ENCODE measurements at regions of chr12 and their contacts with region 1.

Region 1: GRCh38 chr12:46459861-46460545 is 87.4 kb upstream of the SLC38A2 start:
- DNase-seq: peak; percentile 18
- H3K4me3 Mint-ChIP-seq: peak overlapping the region; percentile 44
- H3K27ac Mint-ChIP-seq: peak overlapping the region; percentile 79
- H3K4me1 Mint-ChIP-seq: peaks cover 55% of the 10 kb centered on the region
- H3K27me3 Mint-ChIP-seq: no peaks in the 10 kb centered on the region

Region 2: GRCh38 chr12:46217541-46218321 is 242.3 kb before region 1 on chr12:
- CTCF ChIA-PET with region 1: no interaction called
- POLR2A ChIA-PET with region 1: no interaction called
- intact Hi-C with region 1: loop called (anchors 5 kb)
- DNase-seq: peak; percentile 75
- H3K4me3 Mint-ChIP-seq: peak overlapping the region; percentile 61
- H3K27ac Mint-ChIP-seq: peak overlapping the region; percentile 98
- H3K4me1 Mint-ChIP-seq: peaks cover 95% of the 10 kb centered on the region
- H3K27me3 Mint-ChIP-seq: no peaks in the 10 kb centered on the region

Region 3: DNA sequence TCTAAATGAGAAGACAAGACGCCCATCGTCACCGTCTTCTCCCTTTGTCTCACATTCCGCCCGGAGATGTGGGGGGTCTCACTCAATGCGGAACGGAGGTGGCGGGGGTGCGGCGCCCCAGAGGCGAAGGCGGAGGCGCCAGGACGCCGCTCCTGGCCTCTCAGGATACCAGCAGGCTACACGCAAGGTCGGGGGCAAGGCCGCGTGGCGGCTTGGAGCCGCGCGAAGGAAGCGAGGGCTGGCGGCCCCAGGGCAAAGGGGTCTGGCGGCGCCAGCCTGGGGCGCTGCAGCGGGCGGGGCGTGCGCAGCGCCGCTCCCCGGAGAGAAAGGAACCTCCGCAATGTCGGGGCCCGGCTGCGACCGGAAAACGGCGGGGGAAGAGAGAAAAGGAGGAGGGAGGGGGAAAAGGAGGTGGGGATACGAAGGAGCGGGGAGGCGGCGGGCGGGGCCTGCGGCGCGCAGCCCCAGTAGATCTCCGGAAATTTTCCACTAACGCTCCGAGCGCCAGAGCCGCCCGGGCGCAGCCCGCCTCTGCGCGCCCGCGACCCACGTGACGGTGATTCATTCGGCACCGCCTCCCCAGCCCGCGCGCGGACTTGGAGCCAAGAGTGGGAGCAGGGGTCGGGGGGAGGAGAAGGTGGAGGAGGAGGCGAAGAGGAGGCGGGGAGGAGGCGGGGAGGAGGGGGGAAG is 76.9 kb before region 1 on chr12:
- CTCF ChIA-PET with region 1: no interaction called
- POLR2A ChIA-PET with region 1: interaction called, 7 read pairs
- intact Hi-C with region 1: loop called (anchors 2 kb)
- DNase-seq: peak; percentile 96
- H3K4me3 Mint-ChIP-seq: peak overlapping the region; percentile 80
- H3K27ac Mint-ChIP-seq: peak overlapping the region; percentile 92
- H3K4me1 Mint-ChIP-seq: peaks cover 27% of the 10 kb centered on the region
- H3K27me3 Mint-ChIP-seq: no peaks in the 10 kb centered on the region

Region 4: DNA sequence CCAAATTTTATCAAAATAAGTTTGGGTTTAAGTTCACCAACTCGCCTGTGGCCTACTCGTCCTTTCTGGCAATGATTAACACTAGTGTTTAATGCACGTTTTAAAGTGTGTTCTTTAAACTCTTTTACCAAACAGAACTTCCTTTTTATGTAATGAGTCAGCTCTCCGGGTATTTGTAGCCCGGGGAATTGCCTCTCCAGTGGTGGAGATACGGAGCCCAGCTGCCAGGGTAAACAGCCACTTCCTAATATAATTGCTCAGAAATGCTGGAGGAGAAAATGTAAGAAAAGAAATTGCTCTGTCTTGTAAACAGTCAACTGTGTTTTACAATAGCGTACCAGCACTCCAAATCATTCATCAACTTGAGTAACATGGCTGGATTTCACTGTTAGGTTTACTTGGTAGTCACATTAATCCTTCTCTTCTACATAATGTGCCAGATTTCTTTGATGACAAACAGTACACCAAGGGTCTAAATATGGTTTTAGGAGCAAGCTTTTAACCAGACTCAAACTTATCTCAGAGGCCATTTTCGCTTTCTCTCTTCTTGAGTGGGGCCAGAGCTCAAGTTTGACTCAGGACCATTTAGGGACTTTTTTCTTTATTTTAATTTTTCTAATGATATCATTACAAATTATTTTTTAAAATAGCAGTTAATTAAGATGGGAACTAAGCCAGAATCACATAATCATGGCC is 13.8 kb after region 1 on chr12:
- CTCF ChIA-PET with region 1: no interaction called
- POLR2A ChIA-PET with region 1: no interaction called
- intact Hi-C with region 1: loop called (anchors 2 kb)
- DNase-seq: no peak
- H3K4me3 Mint-ChIP-seq: no peak overlapping the region
- H3K27ac Mint-ChIP-seq: peak overlapping the region; percentile 20
- H3K4me1 Mint-ChIP-seq: peaks cover 18% of the 10 kb centered on the region
- H3K27me3 Mint-ChIP-seq: no peaks in the 10 kb centered on the region

Region 5: DNA sequence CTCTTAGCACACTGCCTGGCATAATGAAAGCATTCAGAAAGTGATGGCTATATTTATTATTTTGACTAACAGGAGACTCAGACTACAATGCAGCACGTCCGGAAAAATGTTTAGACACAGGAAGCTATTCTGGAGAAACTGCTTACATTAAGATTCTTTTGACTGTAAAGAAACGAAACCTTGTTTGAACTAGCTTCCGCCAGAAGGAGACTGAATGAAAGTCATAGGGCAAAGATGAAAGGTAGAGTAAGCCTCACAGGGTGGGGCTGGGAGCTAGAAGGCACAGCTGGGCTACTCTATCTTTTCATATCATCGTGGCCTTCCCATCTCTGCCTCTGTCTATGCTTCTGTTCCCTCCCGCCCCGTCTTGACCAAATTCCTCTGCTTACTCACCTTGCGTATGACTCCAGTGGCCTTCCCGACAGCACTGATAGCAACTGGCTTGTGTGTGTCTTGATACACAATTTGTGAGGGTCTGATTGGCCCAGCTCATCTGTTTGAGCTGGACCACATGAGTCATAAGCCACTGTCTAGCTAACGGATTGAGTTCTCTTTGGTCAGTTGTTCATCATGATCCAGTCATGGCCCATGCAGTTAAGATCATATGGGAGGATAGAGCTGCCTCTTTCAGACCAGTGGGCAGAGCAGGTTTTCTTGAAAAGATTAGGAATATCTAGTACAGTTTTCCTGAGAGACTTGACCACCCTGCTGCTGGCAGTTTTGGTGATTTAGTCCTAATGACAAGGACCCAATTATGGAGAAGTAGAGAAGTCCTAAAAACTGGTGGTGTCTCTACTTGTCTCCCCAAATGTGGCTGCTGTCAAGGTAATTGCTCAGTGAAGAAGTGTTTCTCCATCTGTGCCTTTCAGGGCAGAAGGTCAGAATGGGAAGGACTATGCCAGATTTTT is 64.1 kb after region 1 on chr12:
- CTCF ChIA-PET with region 1: no interaction called
- POLR2A ChIA-PET with region 1: interaction called, 5 read pairs
- intact Hi-C with region 1: loop called (anchors 1 kb)
- DNase-seq: peak; percentile 74
- H3K4me3 Mint-ChIP-seq: peak overlapping the region; percentile 65
- H3K27ac Mint-ChIP-seq: peak overlapping the region; percentile 90
- H3K4me1 Mint-ChIP-seq: peaks cover 30% of the 10 kb centered on the region
- H3K27me3 Mint-ChIP-seq: no peaks in the 10 kb centered on the region

Region 6: DNA sequence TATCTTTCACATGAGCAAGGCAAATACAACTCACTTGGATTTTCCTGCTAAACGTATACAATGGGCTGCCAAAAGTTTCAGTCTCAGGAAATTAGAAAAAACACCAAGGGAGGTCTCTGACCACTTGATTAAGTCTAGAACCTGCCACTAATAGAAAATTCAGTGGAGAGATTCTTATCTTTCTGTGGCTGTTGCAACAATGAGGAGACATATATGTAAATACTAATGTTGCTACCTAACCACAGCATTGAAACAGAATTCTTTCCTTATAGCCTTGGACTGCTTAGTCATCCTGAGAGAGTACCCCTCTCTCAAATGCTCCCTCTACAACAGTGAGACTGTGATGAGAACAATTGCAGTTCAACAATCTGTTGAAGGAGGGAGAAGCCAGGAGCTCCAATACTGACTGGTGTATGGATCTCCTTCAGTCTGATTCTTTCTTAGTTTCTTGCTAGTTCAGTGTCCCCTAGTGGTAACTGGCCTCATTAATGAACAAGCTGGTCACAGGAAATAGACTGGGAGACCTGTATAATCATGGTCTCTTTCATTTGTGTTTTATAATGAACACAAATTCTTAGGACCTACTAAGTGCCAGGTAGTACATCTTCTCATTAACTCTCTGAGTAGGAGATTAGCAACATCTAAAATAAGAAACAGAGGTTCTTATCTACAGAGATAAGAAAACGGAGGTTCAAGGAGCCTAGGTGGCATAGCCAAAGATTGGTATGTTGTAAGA is 201.3 kb after region 1 on chr12:
- CTCF ChIA-PET with region 1: no interaction called
- POLR2A ChIA-PET with region 1: interaction called, 3 read pairs
- intact Hi-C with region 1: loop called (anchors 2 kb)
- DNase-seq: no peak
- H3K4me3 Mint-ChIP-seq: no peak overlapping the region
- H3K27ac Mint-ChIP-seq: no peak overlapping the region
- H3K4me1 Mint-ChIP-seq: peaks cover 34% of the 10 kb centered on the region
- H3K27me3 Mint-ChIP-seq: no peaks in the 10 kb centered on the region

Measured in activated CD4-positive, alpha-beta memory T cell treated with anti-CD3 and anti-CD28 coated beads for 36 hours (primary cell).